Activated CD4-positive, alpha-beta T cell treated with anti-CD3 and anti-CD28 coated beads for 36 hours (primary cell): ENCODE measurements at regions of chr2 and their contacts with region 1.

Region 1: DNA sequence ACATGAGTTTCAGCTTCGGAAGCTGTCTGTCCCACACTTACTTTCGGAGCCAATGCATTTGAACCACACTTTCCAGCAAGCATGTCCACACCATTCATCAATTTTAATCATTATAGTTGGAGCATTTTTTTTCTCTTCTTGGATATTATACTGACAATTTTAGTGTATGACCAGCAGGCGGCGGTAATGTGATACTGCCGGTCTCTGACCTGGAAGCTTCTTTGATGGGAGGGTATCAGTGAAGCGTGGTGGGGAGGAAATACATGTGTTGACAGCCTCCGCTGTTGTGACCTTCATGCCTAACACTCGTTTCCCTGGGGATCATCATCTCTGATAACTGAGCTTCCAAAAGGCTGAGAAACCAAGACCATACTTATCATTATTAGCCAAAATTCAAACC is 231.7 kb downstream of the GBX2 start:
- DNase-seq: peak; percentile 46
- ATAC-seq: no peak
- H3K4me3 Mint-ChIP-seq: no peak overlapping the region
- H3K27ac Mint-ChIP-seq: no peak overlapping the region
- H3K4me1 Mint-ChIP-seq: no peaks in the 10 kb centered on the region
- H3K27me3 Mint-ChIP-seq: peaks cover 17% of the 10 kb centered on the region

Region 2: DNA sequence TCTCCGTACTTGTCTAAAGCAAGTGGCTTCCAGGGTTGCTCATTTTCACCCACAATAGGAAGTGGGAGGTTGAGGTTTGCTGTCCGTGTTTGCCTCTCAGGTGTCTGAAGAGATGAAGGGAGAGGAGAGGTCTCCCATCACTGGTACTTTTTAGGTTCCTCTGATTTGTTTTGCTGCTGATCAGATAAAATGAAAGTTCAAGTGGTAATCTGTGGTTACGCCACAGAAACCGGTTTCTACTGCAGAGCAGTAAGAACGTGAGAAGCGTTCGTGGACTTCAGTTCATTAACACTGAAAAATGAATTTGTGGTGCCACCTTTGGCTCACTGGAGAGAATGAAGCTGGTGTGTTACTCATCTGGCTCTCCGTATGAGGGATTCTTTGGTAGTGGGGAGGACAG is 113.5 kb after region 1 on chr2:
- CTCF ChIA-PET with region 1: no interaction called
- POLR2A ChIA-PET with region 1: no interaction called
- intact Hi-C with region 1: loop called in 1 of 2 experiments (anchors 5 kb)
- DNase-seq: peak; percentile 40
- ATAC-seq: peak; percentile 85
- H3K4me3 Mint-ChIP-seq: no peak overlapping the region
- H3K27ac Mint-ChIP-seq: no peak overlapping the region
- H3K4me1 Mint-ChIP-seq: peaks cover 9% of the 10 kb centered on the region
- H3K27me3 Mint-ChIP-seq: peaks cover 31% of the 10 kb centered on the region

Region 3: DNA sequence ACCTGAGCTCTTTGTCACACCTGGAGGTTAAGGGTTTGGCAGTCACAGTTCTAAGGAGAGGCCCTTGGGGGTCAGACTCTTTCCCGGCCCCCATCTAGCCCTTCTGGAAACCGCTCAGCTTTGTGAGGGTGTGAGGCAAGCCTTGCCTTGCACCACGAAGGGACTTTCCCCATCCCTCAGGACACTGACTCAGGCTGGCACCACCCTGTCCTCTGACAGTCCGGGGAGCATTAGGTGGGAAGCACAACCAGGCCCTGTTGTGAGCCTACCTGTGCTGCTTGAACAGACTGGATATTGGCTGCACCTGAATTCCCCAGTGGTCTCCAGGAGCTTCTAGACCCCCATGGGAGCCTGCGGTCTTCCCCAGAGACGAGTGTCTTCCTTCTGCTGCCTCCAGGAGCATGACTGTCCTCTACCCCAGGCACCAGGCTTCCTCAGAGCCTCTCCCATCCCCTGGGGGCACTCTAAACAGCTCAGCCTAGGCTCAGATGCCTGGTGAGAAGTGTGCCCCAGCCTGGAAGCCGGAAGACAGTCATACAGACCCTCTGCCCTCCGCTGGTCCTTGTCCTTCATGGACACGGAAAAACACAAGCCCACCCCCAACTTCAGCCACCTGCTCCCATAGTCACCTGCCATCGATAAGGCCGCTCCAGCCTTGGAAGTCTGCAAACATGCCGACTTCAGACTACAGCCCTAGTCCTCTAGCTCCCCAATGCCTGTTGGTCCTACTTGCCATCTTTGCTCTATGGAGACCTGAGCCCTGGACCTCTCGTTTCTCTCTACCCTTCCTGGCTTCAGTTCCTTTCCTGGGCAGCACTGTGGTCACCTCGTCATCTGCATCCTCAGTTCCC is 278.9 kb after region 1 on chr2:
- CTCF ChIA-PET with region 1: no interaction called
- POLR2A ChIA-PET with region 1: no interaction called
- intact Hi-C with region 1: no loop called
- DNase-seq: no peak
- ATAC-seq: no peak
- H3K4me3 Mint-ChIP-seq: no peak overlapping the region
- H3K27ac Mint-ChIP-seq: no peak overlapping the region
- H3K4me1 Mint-ChIP-seq: no peaks in the 10 kb centered on the region
- H3K27me3 Mint-ChIP-seq: peaks cover 27% of the 10 kb centered on the region